ENCODE measurements at regions of chr10 and their contacts with region 1.

Region 1: GRCh38 chr10:33155720-33156638 is 178.5 kb downstream of the NRP1 start:
- DNase-seq: peak in 4 of 9 experiments; percentile 37 to 81 (median 62)
- ATAC-seq: peak; percentile 92
- H3K4me3 ChIP-seq: no peak overlapping the region
- H3K4me3 Mint-ChIP-seq: no peak overlapping the region
- H3K27ac ChIP-seq: no peak overlapping the region
- H3K27ac Mint-ChIP-seq: no peak overlapping the region
- H3K4me1 ChIP-seq: peaks cover 21% of the 10 kb centered on the region
- H3K4me1 Mint-ChIP-seq: peaks cover 28% of the 10 kb centered on the region
- H3K27me3 ChIP-seq: no peaks in the 10 kb centered on the region
- H3K27me3 Mint-ChIP-seq: no peaks in the 10 kb centered on the region
- CTCF ChIP-seq: peak; percentile 63

Region 2: DNA sequence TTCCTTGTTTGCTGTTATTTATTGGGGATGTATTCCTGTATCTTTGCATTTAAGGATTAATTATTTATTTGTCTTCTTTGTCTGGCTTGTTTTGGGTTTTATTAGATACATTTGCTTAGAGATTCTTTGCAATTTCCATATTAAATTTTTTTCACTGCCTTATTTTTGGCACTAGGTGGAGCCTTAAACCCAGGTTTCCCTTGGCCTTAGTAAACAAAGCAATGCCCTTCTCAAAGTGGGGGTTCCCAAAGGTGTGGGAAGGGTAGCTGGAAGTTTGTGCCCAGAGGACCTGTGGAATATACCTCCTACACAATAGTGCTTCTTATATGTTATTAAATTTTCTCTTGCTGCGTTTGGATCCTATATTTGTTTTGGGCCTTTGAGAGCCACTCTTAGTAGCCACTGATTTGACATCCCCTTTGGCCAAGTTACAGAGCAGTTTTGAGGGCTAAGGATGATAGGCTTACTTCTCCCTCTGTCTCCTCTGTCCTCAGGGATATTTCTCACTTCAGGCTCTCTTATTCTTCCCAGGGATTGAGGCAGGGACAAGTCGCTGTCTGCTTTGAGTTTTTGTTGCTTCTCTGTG is 360.3 kb before region 1 on chr10:
- CTCF ChIA-PET with region 1: interaction called, 6 read pairs
- POLR2A ChIA-PET with region 1: no interaction called
- intact Hi-C with region 1: loop called in 1 of 2 experiments (anchors 1 kb)
- DNase-seq: peak in 2 of 9 experiments; percentile 53 to 64
- ATAC-seq: no peak
- H3K4me3 ChIP-seq: no peak overlapping the region
- H3K4me3 Mint-ChIP-seq: no peak overlapping the region
- H3K27ac ChIP-seq: no peak overlapping the region
- H3K27ac Mint-ChIP-seq: no peak overlapping the region
- H3K4me1 ChIP-seq: no peaks in the 10 kb centered on the region
- H3K4me1 Mint-ChIP-seq: no peaks in the 10 kb centered on the region
- H3K27me3 ChIP-seq: no peaks in the 10 kb centered on the region
- H3K27me3 Mint-ChIP-seq: peaks cover 3% of the 10 kb centered on the region
- CTCF ChIP-seq: peak; percentile 53

Region 3: DNA sequence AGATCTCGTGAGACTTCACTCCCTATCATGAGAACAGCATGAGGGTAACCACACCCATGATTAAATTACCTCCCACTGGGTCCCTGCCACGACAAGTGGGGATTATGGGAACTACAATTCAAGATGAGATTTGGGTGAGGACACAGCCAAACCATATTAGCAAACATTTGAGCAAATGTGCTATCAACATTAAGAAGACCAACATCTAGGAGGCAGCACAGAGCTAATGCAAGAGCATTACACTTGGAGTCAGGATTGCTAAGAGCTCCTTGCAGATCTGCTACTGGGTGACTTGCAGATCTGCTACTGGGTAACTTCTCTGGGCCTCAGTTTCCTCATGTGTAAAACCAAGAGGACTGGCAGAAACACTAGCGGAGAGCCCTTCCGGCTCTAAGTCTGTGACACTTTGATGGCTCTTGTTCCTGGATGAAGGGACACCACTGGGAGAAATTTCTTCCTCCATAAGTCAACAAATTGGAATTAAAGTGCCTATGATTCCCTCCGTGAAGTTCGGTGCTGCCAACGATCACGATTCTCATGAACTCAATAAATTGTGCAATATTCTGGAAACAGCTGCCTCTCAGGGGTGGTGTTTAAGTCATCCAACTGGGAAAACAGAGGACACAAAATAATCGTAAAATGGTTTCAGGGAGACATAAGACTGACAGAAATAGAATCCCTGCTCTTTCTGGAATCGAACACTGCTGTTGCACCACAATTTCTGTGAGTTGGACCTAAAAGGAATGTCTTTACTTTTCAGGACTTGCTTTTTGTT is 82.2 kb before region 1 on chr10:
- CTCF ChIA-PET with region 1: no interaction called
- POLR2A ChIA-PET with region 1: no interaction called
- intact Hi-C with region 1: loop called in 1 of 2 experiments (anchors 10 kb)
- DNase-seq: peak in 2 of 9 experiments; percentile 18 to 19
- ATAC-seq: no peak
- H3K4me3 ChIP-seq: no peak overlapping the region
- H3K4me3 Mint-ChIP-seq: no peak overlapping the region
- H3K27ac ChIP-seq: no peak overlapping the region
- H3K27ac Mint-ChIP-seq: no peak overlapping the region
- H3K4me1 ChIP-seq: no peaks in the 10 kb centered on the region
- H3K4me1 Mint-ChIP-seq: peaks cover 1% of the 10 kb centered on the region
- H3K27me3 ChIP-seq: no peaks in the 10 kb centered on the region
- H3K27me3 Mint-ChIP-seq: no peaks in the 10 kb centered on the region
- CTCF ChIP-seq: no peak

Region 4: DNA sequence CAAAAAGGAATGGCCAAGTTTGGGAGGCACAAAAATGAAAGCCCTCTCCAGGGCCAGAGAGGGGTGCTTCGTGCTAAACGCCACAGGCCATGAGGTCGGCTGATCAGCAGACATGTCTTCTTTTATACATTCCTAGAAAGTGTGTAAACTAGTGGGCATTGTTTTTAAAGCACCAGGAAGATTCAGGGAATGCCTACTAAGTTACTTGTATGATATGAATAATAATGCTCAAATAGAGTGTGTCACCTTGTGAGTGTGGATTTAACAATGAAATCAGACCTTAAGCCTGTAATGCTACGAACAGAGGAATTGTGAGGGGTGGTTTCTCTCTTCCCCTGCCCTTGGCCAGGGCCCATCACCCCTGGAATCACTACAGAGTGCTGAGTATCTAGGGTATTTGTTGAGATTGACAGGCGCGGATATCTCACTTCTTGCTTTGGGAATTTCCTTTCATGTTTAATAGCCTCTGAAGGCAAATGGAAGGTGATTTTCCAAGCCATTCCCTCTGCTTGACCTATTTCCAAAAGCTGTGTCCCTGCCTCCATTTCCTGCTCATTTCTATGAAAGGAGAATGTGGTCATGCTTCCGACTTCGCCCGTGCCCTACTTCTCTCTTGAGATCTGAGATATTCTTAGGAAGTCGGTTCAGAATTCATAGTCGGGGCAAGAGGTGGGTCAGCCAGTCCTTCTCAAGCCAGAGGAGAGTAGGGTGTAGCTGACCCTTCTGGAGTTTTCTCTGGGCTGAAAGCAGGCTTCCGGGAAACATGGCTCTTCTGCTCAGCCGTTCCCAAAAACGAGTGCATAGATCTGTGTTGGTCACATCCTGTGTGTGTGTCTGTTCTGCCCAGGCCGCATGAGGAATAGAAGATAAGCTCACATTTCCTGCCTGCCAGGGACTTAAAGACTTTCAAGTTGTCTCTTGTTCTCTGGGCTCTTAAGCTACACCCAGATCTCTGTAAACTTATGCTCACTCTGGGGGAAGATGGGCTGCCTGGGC is 30.2 kb before region 1 on chr10:
- CTCF ChIA-PET with region 1: interaction called, 97 read pairs
- POLR2A ChIA-PET with region 1: no interaction called
- intact Hi-C with region 1: no loop called
- DNase-seq: peak in 6 of 9 experiments; percentile 29 to 78 (median 54)
- ATAC-seq: peak; percentile 74
- H3K4me3 ChIP-seq: no peak overlapping the region
- H3K4me3 Mint-ChIP-seq: no peak overlapping the region
- H3K27ac ChIP-seq: peak overlapping the region; percentile 50 to 81
- H3K27ac Mint-ChIP-seq: peak overlapping the region; percentile 88
- H3K4me1 ChIP-seq: peaks cover 34% of the 10 kb centered on the region
- H3K4me1 Mint-ChIP-seq: peaks cover 63% of the 10 kb centered on the region
- H3K27me3 ChIP-seq: no peaks in the 10 kb centered on the region
- H3K27me3 Mint-ChIP-seq: no peaks in the 10 kb centered on the region
- CTCF ChIP-seq: no peak

Region 5: DNA sequence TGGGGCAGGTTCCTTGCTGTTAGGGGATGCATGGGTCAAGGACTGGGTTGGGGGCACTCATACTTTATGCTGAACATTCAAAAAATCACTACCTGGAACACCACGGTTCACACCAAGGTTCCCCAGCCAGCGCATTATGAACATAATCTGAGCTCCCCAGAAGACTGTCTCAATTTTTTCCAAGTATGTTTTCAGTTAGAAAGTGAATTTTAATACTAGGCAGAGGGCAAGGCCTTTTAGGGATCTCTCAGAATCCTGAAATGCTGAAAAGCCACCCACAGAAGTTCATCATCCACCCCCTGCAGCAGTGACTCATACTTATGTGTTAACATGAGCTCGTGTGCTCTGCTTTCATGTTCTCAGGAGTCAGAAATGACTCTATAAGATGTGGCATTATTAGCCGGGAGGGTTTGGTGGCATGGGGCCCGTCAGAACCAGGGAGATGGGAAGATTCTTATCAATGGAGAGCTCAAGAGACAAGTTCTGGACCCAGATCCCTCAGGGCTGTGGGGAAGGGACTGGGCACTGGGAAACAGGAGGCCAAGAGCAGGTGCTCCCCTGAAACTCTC is 12.7 kb before region 1 on chr10:
- CTCF ChIA-PET with region 1: interaction called, 19 read pairs
- POLR2A ChIA-PET with region 1: interaction called, 11 read pairs
- intact Hi-C with region 1: loop called in 1 of 2 experiments (anchors 1 kb)
- DNase-seq: peak in 6 of 9 experiments; percentile 21 to 65 (median 42)
- ATAC-seq: peak; percentile 9
- H3K4me3 ChIP-seq: no peak overlapping the region
- H3K4me3 Mint-ChIP-seq: no peak overlapping the region
- H3K27ac ChIP-seq: no peak overlapping the region
- H3K27ac Mint-ChIP-seq: peak overlapping the region; percentile 55
- H3K4me1 ChIP-seq: peaks cover 33% of the 10 kb centered on the region
- H3K4me1 Mint-ChIP-seq: peaks cover 49% of the 10 kb centered on the region
- H3K27me3 ChIP-seq: no peaks in the 10 kb centered on the region
- H3K27me3 Mint-ChIP-seq: no peaks in the 10 kb centered on the region
- CTCF ChIP-seq: no peak

Measured in CD8-positive, alpha-beta T cell (primary cell).